Mammary epithelial cell (primary cell): ENCODE measurements at regions of chr4 and their contacts with region 1.

Region 1: GRCh38 chr4:47686294-47686872 is 151.5 kb downstream of the CORIN start:
- DNase-seq: peak; percentile 28
- H3K4me3 ChIP-seq: no peak overlapping the region
- H3K27ac ChIP-seq: no peak overlapping the region
- H3K4me1 ChIP-seq: no peaks in the 10 kb centered on the region
- H3K27me3 ChIP-seq: peaks cover 4% of the 10 kb centered on the region
- CTCF ChIP-seq: peak; percentile 84 to 87

Region 2: GRCh38 chr4:47650584-47651130 is 35.7 kb before region 1 on chr4:
- CTCF ChIA-PET with region 1: no interaction called
- dilution Hi-C with region 1: no loop called
- in situ Hi-C with region 1: no loop called
- intact Hi-C with region 1: no loop called
- DNase-seq: no peak
- H3K4me3 ChIP-seq: no peak overlapping the region
- H3K27ac ChIP-seq: no peak overlapping the region
- H3K4me1 ChIP-seq: no peaks in the 10 kb centered on the region
- H3K27me3 ChIP-seq: peaks cover 2% of the 10 kb centered on the region
- CTCF ChIP-seq: no peak

Region 3: DNA sequence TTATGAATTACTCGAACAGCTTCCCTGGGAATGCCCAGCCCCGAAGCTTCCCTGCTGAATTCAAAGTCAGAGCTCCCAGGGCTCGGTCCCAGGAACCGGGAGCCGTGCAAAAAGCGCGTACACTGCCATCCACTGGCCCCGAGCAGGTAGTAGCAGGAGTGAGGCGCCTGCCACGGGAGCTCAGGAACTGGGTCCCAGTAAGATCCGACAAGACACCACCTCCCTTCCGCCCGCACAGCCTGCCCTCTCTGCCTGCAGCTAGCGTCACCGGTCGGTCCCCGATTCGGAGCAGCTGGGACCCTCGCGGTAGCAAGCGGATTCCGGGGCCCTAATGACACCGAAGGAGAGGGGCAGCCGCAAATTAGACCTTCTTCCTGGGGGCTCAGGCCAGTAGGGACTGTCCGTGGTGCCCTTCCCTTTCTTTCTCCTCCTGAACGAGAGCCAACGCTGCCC is 150.3 kb after region 1 on chr4:
- CTCF ChIA-PET with region 1: no interaction called
- dilution Hi-C with region 1: no loop called
- in situ Hi-C with region 1: loop called in 1 of 2 experiments (anchors 10 kb)
- intact Hi-C with region 1: loop called (anchors 1 kb)
- DNase-seq: peak; percentile 78
- H3K4me3 ChIP-seq: peak overlapping the region; percentile 48 to 58 (median 55)
- H3K27ac ChIP-seq: no peak overlapping the region
- H3K4me1 ChIP-seq: peaks cover 19% of the 10 kb centered on the region
- H3K27me3 ChIP-seq: no peaks in the 10 kb centered on the region
- CTCF ChIP-seq: peak; percentile 67 to 88

Region 4: GRCh38 chr4:47926639-47927258 is 240.4 kb after region 1 on chr4:
- CTCF ChIA-PET with region 1: no interaction called
- dilution Hi-C with region 1: no loop called
- in situ Hi-C with region 1: loop called in 1 of 2 experiments (anchors 25 kb)
- intact Hi-C with region 1: no loop called
- DNase-seq: peak; percentile 43
- H3K4me3 ChIP-seq: peak overlapping the region in 1 of 3 experiments; percentile 29
- H3K27ac ChIP-seq: no peak overlapping the region
- H3K4me1 ChIP-seq: peaks cover 8% of the 10 kb centered on the region
- H3K27me3 ChIP-seq: no peaks in the 10 kb centered on the region
- CTCF ChIP-seq: peak; percentile 74 to 86

Region 5: GRCh38 chr4:48093949-48094550 is 407.7 kb after region 1 on chr4:
- CTCF ChIA-PET with region 1: no interaction called
- dilution Hi-C with region 1: no loop called
- in situ Hi-C with region 1: loop called in 1 of 2 experiments (anchors 25 kb)
- intact Hi-C with region 1: loop called (anchors 5 kb)
- DNase-seq: peak; percentile 93
- H3K4me3 ChIP-seq: no peak overlapping the region
- H3K27ac ChIP-seq: peak overlapping the region; percentile 58
- H3K4me1 ChIP-seq: peaks cover 16% of the 10 kb centered on the region
- H3K27me3 ChIP-seq: no peaks in the 10 kb centered on the region
- CTCF ChIP-seq: no peak